Left cardiac atrium (tissue), 4 donors: ENCODE measurements at regions of chr6 and their contacts with region 1.

Region 1: GRCh38 chr6:2209226-2209809 is 36.1 kb downstream of the GMDS start:
- DNase-seq: no peak
- ATAC-seq: peak in 1 of 2 donors; percentile 44

Region 2: DNA sequence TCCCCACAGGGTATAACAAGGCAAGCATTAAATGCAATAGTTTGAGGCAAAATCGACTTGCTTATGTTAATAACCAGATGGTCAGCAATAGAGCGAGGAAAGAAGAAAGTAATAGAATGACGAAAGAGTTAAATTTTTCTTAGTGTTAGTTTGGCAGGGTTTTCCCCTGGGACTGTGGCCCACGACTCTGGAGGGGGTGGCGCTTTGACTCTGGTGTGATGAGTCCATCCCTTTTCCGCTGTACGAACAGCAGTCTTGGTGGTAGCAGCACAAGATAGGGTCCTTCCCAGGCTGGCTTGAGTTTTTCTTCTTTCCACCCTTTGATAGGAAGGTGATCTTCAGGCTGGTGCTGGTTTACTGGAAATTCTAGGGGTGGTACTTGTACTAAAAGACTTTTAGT is 105.3 kb after region 1 on chr6:
- intact Hi-C with region 1: no loop called
- DNase-seq: no peak
- ATAC-seq: no peak

Region 3: DNA sequence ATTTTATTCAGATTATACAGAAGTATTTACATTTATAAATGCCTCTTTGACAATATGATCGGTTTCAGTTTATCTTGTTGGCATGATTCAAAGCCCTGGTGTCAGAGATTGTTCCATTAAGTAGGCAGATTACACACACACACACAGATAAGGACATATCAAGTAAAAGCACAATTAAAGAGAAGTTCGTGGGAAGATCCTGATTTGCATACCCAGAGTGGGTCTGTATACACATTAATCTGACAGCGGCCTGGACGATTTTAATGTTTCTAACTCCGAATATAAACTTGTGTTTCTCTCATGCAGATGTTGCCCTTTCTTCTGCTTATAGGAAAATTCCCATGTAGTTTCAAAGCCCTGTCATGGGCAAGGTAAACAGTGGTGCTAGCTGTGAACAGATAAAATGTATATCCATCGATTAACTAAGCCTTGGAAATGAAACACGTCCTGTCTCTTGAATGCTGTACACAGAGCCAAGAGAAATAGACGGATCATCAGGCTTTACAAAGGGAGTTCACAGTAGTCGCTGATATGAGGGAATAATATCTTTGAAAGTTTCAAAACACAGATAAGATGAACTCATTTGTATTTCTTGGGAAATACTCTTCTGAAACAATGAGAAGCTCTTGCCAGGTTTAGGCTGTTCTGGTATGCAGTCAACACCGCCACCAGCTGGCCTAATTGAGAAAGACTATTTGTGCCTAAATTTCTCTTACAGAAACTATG is 144.3 kb after region 1 on chr6:
- intact Hi-C with region 1: loop called in 1 of 2 experiments (anchors 10 kb)
- DNase-seq: peak; percentile 71
- ATAC-seq: peak; percentile 76 to 87